Caco-2 (cell line): ENCODE measurements at regions of chr7 and their contacts with region 1.

Region 1: DNA sequence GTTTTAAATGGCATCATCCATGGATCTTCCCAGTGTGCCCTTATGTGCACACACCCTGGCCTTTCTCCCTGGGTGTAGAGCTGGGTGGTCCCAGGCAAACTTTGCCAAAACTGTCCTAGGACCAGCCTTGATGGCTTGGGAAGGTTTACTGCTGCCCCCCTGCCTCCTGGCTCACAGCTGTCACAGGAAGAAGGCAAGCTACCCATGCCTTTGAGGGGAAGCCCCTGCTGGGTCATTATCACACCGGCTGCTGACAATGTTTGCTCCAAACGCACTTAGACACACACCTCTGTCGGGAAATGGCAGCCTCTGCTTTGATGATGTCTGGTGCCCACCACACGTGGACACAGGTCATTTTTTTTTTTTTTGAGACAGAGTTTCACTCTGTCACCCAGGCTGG is 25.2 kb upstream of the FIGNL1 start:
- DNase-seq: no peak
- H3K4me3 ChIP-seq: no peak overlapping the region
- H3K4me3 Mint-ChIP-seq: no peak overlapping the region
- H3K27ac Mint-ChIP-seq: no peak overlapping the region
- H3K4me1 ChIP-seq: peaks cover 19% of the 10 kb centered on the region
- H3K4me1 Mint-ChIP-seq: peaks cover 24% of the 10 kb centered on the region
- H3K27me3 ChIP-seq: no peaks in the 10 kb centered on the region
- H3K27me3 Mint-ChIP-seq: no peaks in the 10 kb centered on the region
- CTCF ChIP-seq: no peak

Region 2: GRCh38 chr7:50436133-50436806 is 39.1 kb before region 1 on chr7:
- CTCF ChIA-PET with region 1: no interaction called
- POLR2A ChIA-PET with region 1: no interaction called
- intact Hi-C with region 1: no loop called
- DNase-seq: peak in 1 of 2 experiments; percentile 31
- H3K4me3 ChIP-seq: no peak overlapping the region
- H3K4me3 Mint-ChIP-seq: no peak overlapping the region
- H3K27ac Mint-ChIP-seq: peak overlapping the region; percentile 63
- H3K4me1 ChIP-seq: peaks cover 9% of the 10 kb centered on the region
- H3K4me1 Mint-ChIP-seq: peaks cover 7% of the 10 kb centered on the region
- H3K27me3 ChIP-seq: no peaks in the 10 kb centered on the region
- H3K27me3 Mint-ChIP-seq: no peaks in the 10 kb centered on the region
- CTCF ChIP-seq: no peak

Region 3: GRCh38 chr7:50492770-50493519 is 17.6 kb after region 1 on chr7:
- CTCF ChIA-PET with region 1: no interaction called
- POLR2A ChIA-PET with region 1: no interaction called
- intact Hi-C with region 1: loop called (anchors 2 kb)
- DNase-seq: peak; percentile 56 to 61
- H3K4me3 ChIP-seq: no peak overlapping the region
- H3K4me3 Mint-ChIP-seq: peak overlapping the region; percentile 20
- H3K27ac Mint-ChIP-seq: peak overlapping the region; percentile 60
- H3K4me1 ChIP-seq: peaks cover 16% of the 10 kb centered on the region
- H3K4me1 Mint-ChIP-seq: peaks cover 24% of the 10 kb centered on the region
- H3K27me3 ChIP-seq: no peaks in the 10 kb centered on the region
- H3K27me3 Mint-ChIP-seq: no peaks in the 10 kb centered on the region
- CTCF ChIP-seq: no peak